ENCODE measurements at regions of chr12 and their contacts with region 1.

Region 1: GRCh38 chr12:6688999-6689882 is at the start of gene ZNF384:
- DNase-seq: peak; percentile 98 to 99
- H3K4me3 ChIP-seq: peak within 1 kb of the TSS; percentile 72
- H3K27ac ChIP-seq: peak within 1 kb of the TSS; percentile 84
- H3K4me1 ChIP-seq: peaks cover 27% of the 10 kb centered on the region
- H3K27me3 ChIP-seq: no peaks in the 10 kb centered on the region
- CTCF ChIP-seq: no peak
- total RNA-seq, gene ZNF384: 74.3 and 106 TPM in 2 replicates

Region 2: GRCh38 chr12:6430124-6430989 is 258.9 kb before region 1 on chr12:
- CTCF ChIA-PET with region 1: no interaction called
- POLR2A ChIA-PET with region 1: no interaction called
- intact Hi-C with region 1: loop called (anchors 5 kb)
- DNase-seq: peak; percentile 97 to 98
- H3K4me3 ChIP-seq: peak overlapping the region; percentile 37
- H3K27ac ChIP-seq: peak overlapping the region; percentile 98
- H3K4me1 ChIP-seq: peaks cover 29% of the 10 kb centered on the region
- H3K27me3 ChIP-seq: no peaks in the 10 kb centered on the region
- CTCF ChIP-seq: no peak

Region 3: GRCh38 chr12:6613776-6614512 is 75.3 kb before region 1 on chr12:
- CTCF ChIA-PET with region 1: interaction called, 4 read pairs
- POLR2A ChIA-PET with region 1: interaction called, 60 read pairs
- intact Hi-C with region 1: loop called (anchors 2 kb)
- DNase-seq: peak; percentile 91 to 97
- H3K4me3 ChIP-seq: peak overlapping the region; percentile 8; the same call in 1 of the 2 replicates
- H3K27ac ChIP-seq: peak overlapping the region; percentile 51
- H3K4me1 ChIP-seq: peaks cover 34% of the 10 kb centered on the region
- H3K27me3 ChIP-seq: no peaks in the 10 kb centered on the region
- CTCF ChIP-seq: no peak

Region 4: GRCh38 chr12:6723607-6724396 is 34.6 kb after region 1 on chr12 and contains the start of gene COPS7A:
- CTCF ChIA-PET with region 1: interaction called, 15 read pairs
- POLR2A ChIA-PET with region 1: interaction called, 41 read pairs
- intact Hi-C with region 1: loop called (anchors 1 kb)
- DNase-seq: peak; percentile 98 to 100
- H3K4me3 ChIP-seq: peak within 1 kb of the TSS; percentile 77
- H3K27ac ChIP-seq: peak within 1 kb of the TSS; percentile 60
- H3K4me1 ChIP-seq: peaks cover 19% of the 10 kb centered on the region
- H3K27me3 ChIP-seq: no peaks in the 10 kb centered on the region
- CTCF ChIP-seq: no peak
- total RNA-seq, gene COPS7A: 88.7 and 116 TPM in 2 replicates

Region 5: GRCh38 chr12:6764011-6764828 is 75.0 kb after region 1 on chr12:
- CTCF ChIA-PET with region 1: interaction called, 4 read pairs
- POLR2A ChIA-PET with region 1: interaction called, 28 read pairs
- intact Hi-C with region 1: loop called (anchors 2 kb)
- DNase-seq: peak; percentile 97 to 98
- H3K4me3 ChIP-seq: peak overlapping the region; percentile 21; the same call in 1 of the 2 replicates
- H3K27ac ChIP-seq: no peak overlapping the region; the same call in 1 of the 2 replicates
- H3K4me1 ChIP-seq: peaks cover 36% of the 10 kb centered on the region
- H3K27me3 ChIP-seq: no peaks in the 10 kb centered on the region
- CTCF ChIP-seq: no peak

Region 6: GRCh38 chr12:6851921-6852650 is 162.8 kb after region 1 on chr12 and contains the start of gene USP5:
- CTCF ChIA-PET with region 1: interaction called, 6 read pairs
- POLR2A ChIA-PET with region 1: interaction called, 12 read pairs
- intact Hi-C with region 1: loop called (anchors 1 kb)
- DNase-seq: peak; percentile 99 to 100
- H3K4me3 ChIP-seq: peak within 1 kb of the TSS; percentile 83
- H3K27ac ChIP-seq: peak within 1 kb of the TSS; percentile 69
- H3K4me1 ChIP-seq: peaks cover 25% of the 10 kb centered on the region
- H3K27me3 ChIP-seq: no peaks in the 10 kb centered on the region
- CTCF ChIP-seq: no peak
- total RNA-seq, gene USP5: 267 and 308 TPM in 2 replicates

Measured in PC-9 (cell line).